ENCODE measurements at regions of chr1 and their contacts with region 1.

Region 1: DNA sequence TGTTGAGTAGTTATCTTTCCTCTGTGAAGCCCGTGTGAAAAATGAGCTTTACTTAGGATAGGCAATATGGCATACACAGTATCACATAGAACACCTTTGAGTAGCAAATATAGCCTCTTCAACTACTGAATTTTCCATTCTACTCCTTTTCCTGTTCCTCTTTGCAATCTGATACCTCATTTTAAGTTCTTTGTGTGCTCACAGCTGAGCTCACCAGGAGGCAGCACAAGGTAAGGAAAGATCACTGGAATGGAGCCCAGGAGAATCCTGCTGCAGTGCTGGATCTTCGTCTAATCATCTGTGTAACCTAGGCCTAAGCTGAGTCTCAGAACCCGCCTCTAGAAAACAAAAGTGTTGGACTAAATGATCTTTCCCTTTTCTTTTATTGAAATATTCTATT is 171.0 kb downstream of the LRRC40 start:
- DNase-seq: peak; percentile 49
- H3K4me3 ChIP-seq: no peak overlapping the region
- H3K27ac ChIP-seq: no peak overlapping the region
- H3K27me3 ChIP-seq: no peaks in the 10 kb centered on the region
- CTCF ChIP-seq: peak; percentile 78

Region 2: GRCh38 chr1:70024272-70024671 is 10.1 kb before region 1 on chr1:
- CTCF ChIA-PET with region 1: interaction called, 10 read pairs
- POLR2A ChIA-PET with region 1: no interaction called
- DNase-seq: no peak
- H3K4me3 ChIP-seq: no peak overlapping the region
- H3K27ac ChIP-seq: no peak overlapping the region
- H3K27me3 ChIP-seq: no peaks in the 10 kb centered on the region
- CTCF ChIP-seq: no peak

Region 3: DNA sequence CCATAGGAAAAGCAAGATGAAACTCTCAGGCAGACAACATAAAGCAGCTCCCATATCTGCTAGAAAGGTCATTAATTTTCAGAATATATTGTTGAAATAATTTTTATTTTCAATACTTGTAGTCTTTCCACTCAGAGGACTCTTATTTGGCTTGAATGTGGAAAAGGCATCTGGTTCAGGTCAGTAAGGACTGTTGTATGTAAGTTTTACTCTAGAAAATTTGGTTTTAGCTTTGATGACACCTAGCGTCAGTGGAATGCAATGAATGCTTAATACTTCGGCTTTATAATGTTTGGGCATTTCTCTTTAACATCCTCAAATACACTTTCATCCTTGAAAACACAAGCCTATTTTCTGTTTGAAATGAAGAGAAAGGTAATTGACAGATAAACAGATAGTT is 107.7 kb after region 1 on chr1:
- CTCF ChIA-PET with region 1: interaction called, 91 read pairs
- POLR2A ChIA-PET with region 1: no interaction called
- DNase-seq: no peak
- H3K4me3 ChIP-seq: no peak overlapping the region
- H3K27ac ChIP-seq: no peak overlapping the region
- H3K27me3 ChIP-seq: no peaks in the 10 kb centered on the region
- CTCF ChIP-seq: peak; percentile 60